CD8-positive, alpha-beta T cell (primary cell): ENCODE measurements at regions of chr1 and their contacts with region 1.

Region 1: DNA sequence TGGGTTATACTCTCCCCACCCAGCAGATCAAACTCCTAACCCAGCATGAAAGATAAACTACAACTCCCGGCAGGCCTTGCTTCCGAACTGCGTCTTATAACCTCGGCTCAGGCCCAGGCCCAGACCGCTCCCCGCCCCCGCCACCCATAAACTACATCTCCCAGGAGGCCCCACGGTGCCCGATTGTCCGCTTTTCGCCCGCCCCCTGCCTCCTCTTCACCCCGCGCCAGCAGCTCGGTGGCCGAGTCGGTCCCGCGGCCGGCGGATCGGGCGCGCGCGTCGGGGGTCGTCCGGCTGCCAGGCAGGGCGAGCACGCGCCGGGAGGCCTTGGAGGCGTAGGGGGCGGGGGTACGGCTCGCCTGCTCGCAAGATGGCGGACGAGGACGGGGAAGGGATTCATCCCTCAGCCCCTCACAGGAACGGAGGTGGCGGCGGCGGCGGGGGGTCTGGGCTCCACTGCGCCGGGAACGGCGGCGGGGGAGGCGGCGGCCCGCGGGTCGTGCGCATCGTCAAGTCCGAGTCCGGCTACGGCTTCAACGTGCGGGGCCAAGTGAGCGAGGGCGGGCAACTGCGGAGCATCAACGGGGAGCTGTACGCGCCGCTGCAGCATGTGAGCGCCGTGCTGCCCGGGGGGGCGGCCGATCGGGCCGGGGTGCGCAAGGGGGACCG is at the start of gene SNX27:
- DNase-seq: peak; percentile 74 to 95 (median 87)
- ATAC-seq: peak; percentile 89
- H3K4me3 ChIP-seq: peak within 1 kb of the TSS; percentile 64 to 93
- H3K4me3 Mint-ChIP-seq: peak within 1 kb of the TSS; percentile 99
- H3K27ac ChIP-seq: peak within 1 kb of the TSS; percentile 54 to 59
- H3K27ac Mint-ChIP-seq: peak within 1 kb of the TSS; percentile 95
- H3K4me1 ChIP-seq: peaks cover 16% of the 10 kb centered on the region
- H3K4me1 Mint-ChIP-seq: peaks cover 38% of the 10 kb centered on the region
- H3K27me3 ChIP-seq: no peaks in the 10 kb centered on the region
- H3K27me3 Mint-ChIP-seq: peaks cover 4% of the 10 kb centered on the region
- CTCF ChIP-seq: no peak
- total RNA-seq, gene SNX27: 9.8 to 12.2 TPM

Region 2: DNA sequence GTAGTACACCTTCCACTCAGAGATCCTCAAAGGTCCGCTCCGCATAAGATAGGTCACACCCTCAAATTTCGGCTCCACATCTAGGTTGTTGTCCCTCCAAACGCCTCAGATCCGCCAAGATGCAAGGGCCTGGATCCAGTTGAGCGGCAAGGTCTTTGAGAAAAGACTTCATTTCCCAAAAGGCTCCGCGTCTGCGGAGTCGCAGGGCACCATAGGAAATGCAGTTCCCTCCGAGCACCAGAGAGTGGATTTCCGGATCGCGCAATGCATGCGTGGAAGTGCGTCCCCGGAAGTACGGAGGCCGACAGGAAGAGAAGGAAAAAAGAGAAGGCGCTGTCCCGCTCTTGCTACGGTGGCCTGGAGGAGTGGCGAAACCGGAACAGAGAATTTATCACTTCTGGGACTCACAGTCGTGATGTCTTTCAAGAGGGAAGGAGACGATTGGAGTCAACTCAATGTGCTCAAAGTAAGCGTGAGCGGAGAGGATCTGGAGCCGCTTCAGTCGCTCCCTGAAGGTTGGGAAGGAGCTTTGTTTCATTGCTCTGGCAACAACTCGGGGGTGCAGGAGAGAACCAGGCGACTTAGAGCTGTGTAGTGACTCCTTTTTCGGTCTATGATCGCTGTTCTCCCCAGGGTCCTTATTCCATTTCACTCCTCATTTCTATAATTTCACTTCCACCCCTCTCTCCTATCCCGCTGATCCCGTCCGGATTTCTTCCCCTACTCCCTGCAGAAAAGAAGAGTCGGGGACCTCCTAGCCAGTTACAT is 446.0 kb before region 1 on chr1 and contains the starts of genes LYSMD1 and SCNM1:
- CTCF ChIA-PET with region 1: no interaction called
- POLR2A ChIA-PET with region 1: no interaction called
- intact Hi-C with region 1: loop called in 1 of 2 experiments (anchors 5 kb)
- DNase-seq: peak; percentile 91 to 99 (median 95)
- ATAC-seq: peak; percentile 96
- H3K4me3 ChIP-seq: peak within 1 kb of the TSS; percentile 82 to 94
- H3K4me3 Mint-ChIP-seq: peak within 1 kb of the TSS; percentile 95
- H3K27ac ChIP-seq: peak within 1 kb of the TSS; percentile 72 to 77
- H3K27ac Mint-ChIP-seq: peak within 1 kb of the TSS; percentile 94
- H3K4me1 ChIP-seq: peaks cover 29% of the 10 kb centered on the region
- H3K4me1 Mint-ChIP-seq: peaks cover 50% of the 10 kb centered on the region
- H3K27me3 ChIP-seq: no peaks in the 10 kb centered on the region
- H3K27me3 Mint-ChIP-seq: no peaks in the 10 kb centered on the region
- CTCF ChIP-seq: no peak
- total RNA-seq, gene LYSMD1: 0.49 to 0.94 TPM
- total RNA-seq, gene SCNM1: 35.0 to 40.4 TPM

Region 3: GRCh38 chr1:151346769-151347522 is 265.0 kb before region 1 on chr1 and contains the start of gene RFX5:
- CTCF ChIA-PET with region 1: no interaction called
- POLR2A ChIA-PET with region 1: no interaction called
- intact Hi-C with region 1: loop called in 1 of 2 experiments (anchors 5 kb)
- DNase-seq: peak; percentile 85 to 99 (median 93)
- ATAC-seq: peak; percentile 92
- H3K4me3 ChIP-seq: peak within 1 kb of the TSS; percentile 75 to 83
- H3K4me3 Mint-ChIP-seq: peak within 1 kb of the TSS; percentile 95
- H3K27ac ChIP-seq: peak within 1 kb of the TSS; percentile 89 to 98
- H3K27ac Mint-ChIP-seq: peak within 1 kb of the TSS; percentile 99
- H3K4me1 ChIP-seq: peaks cover 15% of the 10 kb centered on the region
- H3K4me1 Mint-ChIP-seq: peaks cover 38% of the 10 kb centered on the region
- H3K27me3 ChIP-seq: no peaks in the 10 kb centered on the region
- H3K27me3 Mint-ChIP-seq: no peaks in the 10 kb centered on the region
- CTCF ChIP-seq: no peak
- total RNA-seq, gene RFX5: 62.6 to 65.9 TPM

Region 4: DNA sequence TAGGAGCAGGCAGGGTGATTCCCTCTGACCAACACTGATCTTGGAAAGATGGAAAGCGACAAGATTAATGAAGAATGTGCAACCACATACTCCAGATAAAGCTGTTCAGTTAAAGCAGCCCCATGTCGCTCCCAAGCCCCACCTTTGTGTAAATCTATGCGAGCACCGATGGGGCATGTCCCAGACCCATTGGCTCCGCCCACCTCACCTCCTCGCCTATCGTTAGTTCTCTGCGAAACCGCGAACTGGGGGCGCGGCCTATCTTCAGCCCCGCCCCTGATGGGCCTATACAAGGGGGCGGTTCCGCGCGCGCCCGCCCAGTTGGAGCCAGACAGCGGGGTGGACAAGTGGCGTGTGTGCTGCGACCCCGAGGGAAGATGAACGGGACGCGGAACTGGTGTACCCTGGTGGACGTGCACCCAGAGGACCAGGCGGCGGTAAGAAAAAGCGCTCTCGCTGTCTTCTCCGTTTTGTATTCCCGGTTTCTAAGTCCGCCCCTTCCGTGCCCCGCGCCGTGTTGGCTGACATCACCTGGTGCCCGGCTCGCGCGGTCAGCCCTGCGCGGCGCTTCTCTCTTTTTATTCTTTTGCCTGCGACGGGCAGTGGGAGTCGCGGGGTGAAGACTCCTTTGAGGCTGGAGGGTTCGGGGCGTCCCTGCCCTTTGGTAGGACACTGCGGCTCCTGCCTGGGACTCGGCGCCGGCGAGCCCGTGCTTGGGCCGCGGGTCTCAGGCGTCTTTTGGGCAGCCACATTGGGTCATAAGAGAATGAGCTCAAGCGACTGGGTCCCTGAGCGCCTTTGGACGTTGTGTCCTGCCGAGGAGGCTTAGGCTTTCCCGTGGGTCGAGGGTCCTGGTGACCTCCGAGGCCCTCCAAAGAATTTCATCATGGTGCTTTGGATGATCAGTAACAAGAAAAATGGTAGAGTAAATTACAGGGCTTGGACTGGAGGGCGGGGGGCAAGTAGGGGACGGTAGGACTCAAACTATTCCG is 71.7 kb before region 1 on chr1 and contains the start of gene TUFT1:
- CTCF ChIA-PET with region 1: no interaction called
- POLR2A ChIA-PET with region 1: no interaction called
- intact Hi-C with region 1: loop called (anchors 1 to 2 kb)
- DNase-seq: peak; percentile 86 to 97 (median 94)
- ATAC-seq: peak; percentile 99
- H3K4me3 ChIP-seq: peak within 1 kb of the TSS; percentile 74 to 78
- H3K4me3 Mint-ChIP-seq: peak within 1 kb of the TSS; percentile 95
- H3K27ac ChIP-seq: peak within 1 kb of the TSS in 1 of 2 experiments; percentile 29
- H3K27ac Mint-ChIP-seq: peak within 1 kb of the TSS; percentile 82
- H3K4me1 ChIP-seq: peaks cover 14% of the 10 kb centered on the region
- H3K4me1 Mint-ChIP-seq: peaks cover 21% of the 10 kb centered on the region
- H3K27me3 ChIP-seq: peaks cover 4 to 16% of the 10 kb centered on the region in 2 experiments
- H3K27me3 Mint-ChIP-seq: no peaks in the 10 kb centered on the region
- CTCF ChIP-seq: no peak
- total RNA-seq, gene TUFT1: 8.5 TPM

Region 5: DNA sequence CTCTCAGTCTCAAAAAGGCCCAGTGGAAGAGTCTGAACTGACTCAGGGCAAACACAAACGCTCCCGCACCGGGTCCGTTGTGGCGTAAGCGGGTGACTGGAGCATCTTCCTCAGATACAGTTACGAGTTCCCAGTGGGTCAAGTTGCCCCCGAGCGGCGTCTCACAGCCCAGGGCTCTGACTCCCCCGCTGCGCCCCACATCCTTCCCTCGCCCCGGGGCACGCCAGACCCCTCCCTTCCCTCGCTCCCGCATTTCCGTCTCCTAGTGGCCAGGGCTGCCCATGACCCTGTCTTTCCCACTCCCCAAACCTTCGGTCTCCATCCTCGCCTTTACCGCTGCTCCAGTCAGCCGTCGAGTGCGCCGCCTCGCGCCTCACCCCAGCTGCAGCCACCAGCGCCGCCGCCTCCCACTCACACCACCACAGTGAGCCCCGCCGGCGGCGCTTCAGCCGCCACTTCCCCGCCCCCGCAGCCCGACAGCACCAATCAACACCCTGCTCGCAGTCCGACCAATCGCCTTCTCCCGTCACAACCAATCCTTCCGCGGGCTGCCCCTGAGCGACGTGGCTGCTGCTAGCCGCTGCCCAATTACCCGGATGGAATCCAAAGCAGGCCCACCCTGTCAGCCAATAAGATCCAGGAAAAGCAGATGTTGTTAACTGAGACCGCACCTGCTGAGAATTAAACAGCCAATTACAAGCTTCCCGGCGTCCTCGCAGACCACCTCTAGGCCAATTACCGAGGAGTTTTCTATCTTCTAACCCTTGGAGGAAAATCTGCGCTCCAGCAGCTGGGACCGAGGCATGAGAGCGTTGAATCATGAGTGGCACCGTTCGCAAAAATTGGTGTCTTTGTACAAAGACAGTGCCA is 178.3 kb after region 1 on chr1 and contains the start of gene TDRKH:
- CTCF ChIA-PET with region 1: no interaction called
- POLR2A ChIA-PET with region 1: no interaction called
- intact Hi-C with region 1: loop called (anchors 1 to 5 kb)
- DNase-seq: peak; percentile 95 to 99 (median 97)
- ATAC-seq: peak; percentile 94
- H3K4me3 ChIP-seq: peak within 1 kb of the TSS; percentile 68 to 82
- H3K4me3 Mint-ChIP-seq: peak within 1 kb of the TSS; percentile 98
- H3K27ac ChIP-seq: peak within 1 kb of the TSS; percentile 29 to 37
- H3K27ac Mint-ChIP-seq: peak within 1 kb of the TSS; percentile 89
- H3K4me1 ChIP-seq: peaks cover 12% of the 10 kb centered on the region
- H3K4me1 Mint-ChIP-seq: peaks cover 30% of the 10 kb centered on the region
- H3K27me3 ChIP-seq: no peaks in the 10 kb centered on the region
- H3K27me3 Mint-ChIP-seq: no peaks in the 10 kb centered on the region
- CTCF ChIP-seq: no peak
- total RNA-seq, gene TDRKH: 3.6 to 3.9 TPM